HCT116 (cell line): ENCODE measurements at regions of chr5 and their contacts with region 1.

Region 1: DNA sequence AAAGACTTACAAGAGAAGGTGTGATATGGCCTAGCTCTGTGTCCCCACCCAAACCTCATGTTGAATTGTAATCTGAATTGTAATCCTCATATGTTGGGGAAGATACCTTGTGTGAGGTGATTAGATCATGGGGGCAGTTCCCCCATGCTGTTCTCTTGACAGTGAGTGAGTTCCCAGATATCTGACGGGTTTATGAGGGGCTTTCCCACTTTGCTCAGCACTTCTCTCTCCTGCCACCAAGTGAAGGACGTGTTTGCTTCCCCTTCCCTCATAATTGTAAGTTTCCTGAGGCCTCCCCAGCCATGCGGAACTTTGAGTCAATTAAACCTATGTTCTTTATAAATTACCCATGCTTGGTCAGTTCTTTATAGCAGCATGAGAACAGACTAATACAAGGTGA is 49.0 kb downstream of the CDO1 start:
- DNase-seq: no peak
- ATAC-seq: no peak
- H3K4me3 ChIP-seq: no peak overlapping the region
- H3K27ac ChIP-seq: no peak overlapping the region
- H3K4me1 ChIP-seq: no peaks in the 10 kb centered on the region
- H3K27me3 ChIP-seq: no peaks in the 10 kb centered on the region
- CTCF ChIP-seq: no peak
- POLR2A ChIP-seq: no peak
- RAD21 ChIP-seq: no peak

Region 2: GRCh38 chr5:116045821-116046220 is 278.4 kb after region 1 on chr5:
- CTCF ChIA-PET with region 1: no interaction called
- POLR2A ChIA-PET with region 1: no interaction called
- RAD21 ChIA-PET with region 1: no interaction called
- intact Hi-C with region 1: loop called (anchors 5 kb)
- DNase-seq: no peak
- ATAC-seq: peak; percentile 71
- H3K4me3 ChIP-seq: 0 out of 4 replicates have a peak overlapping the region, but pooled peaks of 1 of the 2 experiments have one; percentile 2
- H3K27ac ChIP-seq: peak overlapping the region; percentile 36; the same call in 1 of the 2 replicates
- H3K4me1 ChIP-seq: peaks cover 24 to 50% of the 10 kb centered on the region in 2 experiments
- H3K27me3 ChIP-seq: no peaks in the 10 kb centered on the region
- CTCF ChIP-seq: no peak
- POLR2A ChIP-seq: no peak
- RAD21 ChIP-seq: no peak

Region 3: DNA sequence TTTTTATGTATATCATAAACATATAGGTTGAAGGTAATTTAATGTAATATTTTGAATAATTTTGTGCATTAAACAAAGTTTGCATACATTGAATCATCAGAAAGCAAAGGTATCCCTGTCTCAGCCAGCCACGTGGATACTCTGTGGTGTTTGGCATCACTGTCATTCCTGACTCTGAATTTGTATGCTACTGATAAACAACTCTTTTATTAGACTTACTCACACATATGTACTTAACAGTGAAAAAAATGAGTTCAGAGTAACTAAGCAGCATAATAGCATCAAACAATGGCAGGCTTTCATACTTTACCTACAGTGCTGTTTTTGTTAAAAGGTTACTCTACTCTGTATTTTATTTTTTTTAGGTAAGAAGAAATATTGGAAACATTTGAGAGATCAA is 489.3 kb after region 1 on chr5:
- CTCF ChIA-PET with region 1: no interaction called
- POLR2A ChIA-PET with region 1: no interaction called
- RAD21 ChIA-PET with region 1: no interaction called
- intact Hi-C with region 1: no loop called
- DNase-seq: no peak
- ATAC-seq: no peak
- H3K4me3 ChIP-seq: no peak overlapping the region
- H3K27ac ChIP-seq: no peak overlapping the region
- H3K4me1 ChIP-seq: no peaks in the 10 kb centered on the region
- H3K27me3 ChIP-seq: no peaks in the 10 kb centered on the region
- CTCF ChIP-seq: no peak
- POLR2A ChIP-seq: no peak
- RAD21 ChIP-seq: no peak